K562 (cell line): ENCODE measurements at regions of chr6 and their contacts with region 1.

Region 1: GRCh38 chr6:110873981-110874879 is at the start of gene AMD1:
- DNase-seq: peak; percentile 90 to 98 (median 94)
- ATAC-seq: peak; percentile 82
- H3K4me3 ChIP-seq: peak within 1 kb of the TSS; percentile 84
- H3K27ac ChIP-seq: peak within 1 kb of the TSS; percentile 90
- H3K4me1 ChIP-seq: peaks cover 15 to 18% of the 10 kb centered on the region in 2 experiments; a peak in 4 of 5 replicates
- H3K27me3 ChIP-seq: no peaks in the 10 kb centered on the region
- CTCF ChIP-seq: 0 out of 6 replicates have a peak, but pooled peaks of 1 of the 3 experiments have one; percentile 5
- EP300 ChIP-seq: no peak
- POLR2A ChIP-seq: peak; percentile 100
- RAD21 ChIP-seq: peak in 1 of 2 experiments; percentile 32; a peak in 1 of 4 replicates
- polyA plus RNA-seq, gene AMD1: 82.1 to 85.6 TPM

Region 2: GRCh38 chr6:109610590-109610989 is 1263.6 kb before region 1 on chr6:
- CTCF ChIA-PET with region 1: no interaction called
- POLR2A ChIA-PET with region 1: no interaction called
- in situ Hi-C with region 1: no loop called
- intact Hi-C with region 1: no loop called
- DNase-seq: no peak
- ATAC-seq: no peak
- H3K4me3 ChIP-seq: no peak overlapping the region
- H3K27ac ChIP-seq: no peak overlapping the region
- H3K4me1 ChIP-seq: no peaks in the 10 kb centered on the region
- H3K27me3 ChIP-seq: peaks cover 0 to 5% of the 10 kb centered on the region in 2 experiments; a peak in 1 of 5 replicates
- CTCF ChIP-seq: no peak
- EP300 ChIP-seq: no peak
- POLR2A ChIP-seq: no peak
- RAD21 ChIP-seq: no peak

Region 3: DNA sequence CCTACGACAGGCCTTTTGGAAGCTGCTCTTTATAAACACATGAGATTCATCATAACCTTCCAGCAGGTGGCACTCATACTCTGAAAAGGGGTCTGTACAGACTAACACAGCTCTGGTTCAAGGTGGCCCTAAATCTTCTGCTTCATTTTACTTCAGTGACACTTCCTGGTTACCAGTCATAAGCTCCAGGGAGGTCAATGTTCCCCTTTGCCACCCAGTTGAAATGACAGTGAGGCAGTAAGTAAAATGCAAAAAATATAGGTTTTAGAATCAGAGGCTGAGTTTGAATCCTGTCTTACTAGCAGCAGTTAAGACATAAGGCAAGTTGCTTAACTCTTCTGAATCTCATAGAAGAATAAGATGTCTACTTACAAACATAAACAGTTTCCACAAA is 191.8 kb before region 1 on chr6:
- CTCF ChIA-PET with region 1: no interaction called
- POLR2A ChIA-PET with region 1: interaction called, 40 read pairs
- in situ Hi-C with region 1: no loop called
- intact Hi-C with region 1: loop called (anchors 2 kb)
- DNase-seq: peak; percentile 54 to 85 (median 62)
- ATAC-seq: peak; percentile 100
- H3K4me3 ChIP-seq: no peak overlapping the region
- H3K27ac ChIP-seq: no peak overlapping the region
- H3K4me1 ChIP-seq: no peaks in the 10 kb centered on the region
- H3K27me3 ChIP-seq: no peaks in the 10 kb centered on the region
- CTCF ChIP-seq: peak; percentile 72 to 91 (median 72)
- EP300 ChIP-seq: peak; percentile 36; the same call in 1 of the 2 replicates
- POLR2A ChIP-seq: no peak
- RAD21 ChIP-seq: peak; percentile 97

Region 4: DNA sequence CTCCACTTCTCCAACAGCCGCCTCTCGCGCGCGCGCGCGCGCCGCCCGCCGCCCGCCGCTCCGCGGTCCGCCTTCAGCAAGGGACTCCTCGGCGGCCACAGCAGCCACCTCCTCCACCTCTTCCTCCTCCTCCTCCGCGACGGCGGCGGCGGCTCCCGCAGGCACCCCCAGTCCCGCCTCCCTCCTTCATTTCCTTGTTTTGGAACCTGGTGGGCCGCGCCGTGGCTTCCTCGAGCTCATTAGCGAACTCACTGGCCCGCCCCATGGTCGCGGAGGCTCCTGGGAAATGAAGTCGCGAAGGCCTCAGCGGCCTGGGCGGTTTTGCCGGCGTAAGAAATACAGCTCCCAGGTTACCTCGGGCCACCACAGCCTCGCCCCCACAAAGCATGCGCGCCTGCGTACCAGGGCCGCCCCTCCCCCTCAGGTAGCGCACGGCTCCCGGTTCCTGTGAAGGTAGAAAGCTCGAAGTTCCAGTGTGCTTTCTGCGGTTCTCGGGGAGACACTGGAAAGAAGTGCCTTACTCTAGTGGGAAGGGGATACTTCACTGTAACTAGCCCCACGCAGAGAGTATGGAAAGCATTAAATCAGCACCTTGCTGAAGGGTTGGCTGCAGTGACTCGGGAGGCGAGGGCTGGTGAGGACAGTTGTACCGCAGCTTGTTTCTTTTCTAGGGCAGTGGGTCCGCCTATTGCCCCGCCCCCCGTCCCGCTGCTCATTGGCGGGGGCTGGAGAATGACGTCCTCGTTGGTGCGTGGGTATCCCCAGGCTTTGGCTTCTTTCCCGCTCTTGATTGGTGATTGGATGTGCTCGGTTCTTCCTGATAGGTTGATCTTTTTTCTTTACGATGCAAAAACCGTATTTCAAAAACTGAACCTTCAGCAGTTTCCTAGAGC is 58.8 kb before region 1 on chr6 and contains the start of gene CDK19:
- CTCF ChIA-PET with region 1: no interaction called
- POLR2A ChIA-PET with region 1: interaction called, 125 read pairs
- in situ Hi-C with region 1: no loop called
- intact Hi-C with region 1: loop called (anchors 1 kb)
- DNase-seq: peak; percentile 95 to 99 (median 97)
- ATAC-seq: peak; percentile 92
- H3K4me3 ChIP-seq: peak within 1 kb of the TSS; percentile 82
- H3K27ac ChIP-seq: peak within 1 kb of the TSS; percentile 100
- H3K4me1 ChIP-seq: peaks cover 21 to 42% of the 10 kb centered on the region in 2 experiments
- H3K27me3 ChIP-seq: no peaks in the 10 kb centered on the region
- CTCF ChIP-seq: no peak
- EP300 ChIP-seq: no peak
- POLR2A ChIP-seq: peak; percentile 99
- RAD21 ChIP-seq: 0 out of 4 replicates have a peak, but pooled peaks of 1 of the 2 experiments have one; percentile 9
- polyA plus RNA-seq, gene CDK19: 3.8 to 4.0 TPM

Region 5: GRCh38 chr6:110897433-110897832 is 23.2 kb after region 1 on chr6:
- CTCF ChIA-PET with region 1: no interaction called
- POLR2A ChIA-PET with region 1: interaction called, 37 read pairs
- in situ Hi-C with region 1: no loop called
- intact Hi-C with region 1: no loop called
- DNase-seq: peak in 1 of 4 experiments; percentile 49
- ATAC-seq: peak; percentile 63
- H3K4me3 ChIP-seq: no peak overlapping the region
- H3K27ac ChIP-seq: peak overlapping the region; percentile 17; the same call in 2 of the 3 replicates
- H3K4me1 ChIP-seq: peaks cover 0 to 2% of the 10 kb centered on the region in 2 experiments; a peak in 1 of 5 replicates
- H3K27me3 ChIP-seq: no peaks in the 10 kb centered on the region
- CTCF ChIP-seq: no peak
- EP300 ChIP-seq: no peak
- POLR2A ChIP-seq: peak; percentile 66
- RAD21 ChIP-seq: no peak

Region 6: GRCh38 chr6:110958329-110959192 is 84.3 kb after region 1 on chr6 and contains the start of gene GTF3C6:
- CTCF ChIA-PET with region 1: no interaction called
- POLR2A ChIA-PET with region 1: interaction called, 13 read pairs
- in situ Hi-C with region 1: no loop called
- intact Hi-C with region 1: loop called (anchors 5 kb)
- DNase-seq: peak; percentile 81 to 94 (median 83)
- ATAC-seq: peak; percentile 98
- H3K4me3 ChIP-seq: peak within 1 kb of the TSS; percentile 62
- H3K27ac ChIP-seq: peak within 1 kb of the TSS; percentile 90
- H3K4me1 ChIP-seq: peaks cover 0 to 17% of the 10 kb centered on the region in 2 experiments; a peak in 4 of 5 replicates
- H3K27me3 ChIP-seq: no peaks in the 10 kb centered on the region
- CTCF ChIP-seq: no peak
- EP300 ChIP-seq: no peak
- POLR2A ChIP-seq: peak; percentile 99
- RAD21 ChIP-seq: no peak; a peak in 1 of 4 replicates
- polyA plus RNA-seq, gene GTF3C6: 105 to 127 TPM